Activated CD8-positive, alpha-beta T cell treated with anti-CD3 and anti-CD28 coated beads, Interleukin-2, amount 10 ng/mL, durations not matched to agents 7 days and 5 days (primary cell): ENCODE measurements at regions of chr16 and their contacts with region 1.

Region 1: GRCh38 chr16:31073968-31074813 is at the starts of genes ZNF646 and ZNF668:
- DNase-seq: peak; percentile 100
- ATAC-seq: peak; percentile 77
- H3K4me3 Mint-ChIP-seq: peak within 1 kb of the TSS; percentile 99
- H3K27ac Mint-ChIP-seq: peak within 1 kb of the TSS; percentile 99
- H3K4me1 Mint-ChIP-seq: peaks cover 48% of the 10 kb centered on the region
- H3K27me3 Mint-ChIP-seq: no peaks in the 10 kb centered on the region
- total RNA-seq, gene ZNF646: 26.0 to 30.3 TPM
- total RNA-seq, gene ZNF668: 20.8 to 22.2 TPM

Region 2: GRCh38 chr16:30984669-30985400 is 89.4 kb before region 1 on chr16 and contains the start of gene HSD3B7:
- CTCF ChIA-PET with region 1: interaction called, 15 read pairs
- POLR2A ChIA-PET with region 1: interaction called, 15 read pairs
- DNase-seq: peak; percentile 85
- ATAC-seq: peak; percentile 80
- H3K4me3 Mint-ChIP-seq: peak within 1 kb of the TSS; percentile 52
- H3K27ac Mint-ChIP-seq: peak within 1 kb of the TSS; percentile 43
- H3K4me1 Mint-ChIP-seq: peaks cover 15% of the 10 kb centered on the region
- H3K27me3 Mint-ChIP-seq: no peaks in the 10 kb centered on the region
- total RNA-seq, gene HSD3B7: 6.3 to 7.8 TPM

Region 3: DNA sequence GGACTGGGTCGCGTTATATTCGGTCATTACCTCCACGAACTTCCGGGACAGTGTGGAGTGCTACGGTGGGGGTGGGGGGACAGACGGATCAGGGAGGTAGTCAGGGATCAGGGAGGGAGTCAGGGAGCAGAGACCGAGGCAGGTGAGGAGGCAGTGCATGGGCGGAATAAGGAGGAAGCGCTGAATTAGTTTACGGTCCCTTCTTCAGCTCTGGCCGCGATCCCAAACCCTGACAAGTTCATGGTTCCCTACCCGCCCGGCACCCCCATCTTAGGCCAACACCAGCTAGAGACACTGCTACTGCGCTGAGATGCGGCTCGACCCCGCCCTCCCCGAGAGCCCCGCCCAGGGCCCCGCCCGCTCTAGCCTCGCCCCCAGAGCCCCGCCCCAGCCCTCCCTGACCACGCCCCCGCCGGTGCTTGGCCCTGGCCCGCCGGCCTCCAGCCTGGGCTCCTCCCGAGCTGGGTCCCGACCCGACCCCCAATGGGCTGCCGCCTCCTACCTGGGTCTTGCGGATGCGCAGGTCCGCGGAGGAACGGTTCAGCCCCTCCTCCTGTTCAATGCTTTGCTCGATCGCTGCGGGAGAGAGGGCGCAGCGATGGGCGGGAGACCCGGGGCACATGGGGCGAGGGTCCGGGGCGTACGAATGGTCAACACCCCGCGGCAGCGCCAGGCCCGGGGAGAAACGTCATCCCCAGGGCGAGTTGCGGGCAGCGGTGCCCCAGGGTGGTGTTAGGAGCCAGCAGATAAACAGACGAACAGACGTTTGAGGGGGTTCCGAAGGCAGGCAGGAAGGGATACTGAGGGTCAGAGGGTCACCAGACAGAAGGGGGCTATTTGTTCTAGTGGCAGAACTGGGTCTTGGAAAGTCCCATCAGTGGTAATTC is 76.9 kb before region 1 on chr16:
- CTCF ChIA-PET with region 1: interaction called, 3 read pairs
- POLR2A ChIA-PET with region 1: interaction called, 13 read pairs
- DNase-seq: peak; percentile 90
- ATAC-seq: peak; percentile 99
- H3K4me3 Mint-ChIP-seq: peak overlapping the region; percentile 92
- H3K27ac Mint-ChIP-seq: peak overlapping the region; percentile 94
- H3K4me1 Mint-ChIP-seq: peaks cover 31% of the 10 kb centered on the region
- H3K27me3 Mint-ChIP-seq: peaks cover 4% of the 10 kb centered on the region

Region 4: GRCh38 chr16:31094424-31095120 is 20.4 kb after region 1 on chr16 and contains the start of gene VKORC1:
- CTCF ChIA-PET with region 1: interaction called, 15 read pairs
- POLR2A ChIA-PET with region 1: interaction called, 12 read pairs
- DNase-seq: peak; percentile 93
- ATAC-seq: peak; percentile 95
- H3K4me3 Mint-ChIP-seq: peak within 1 kb of the TSS; percentile 95
- H3K27ac Mint-ChIP-seq: peak within 1 kb of the TSS; percentile 94
- H3K4me1 Mint-ChIP-seq: peaks cover 34% of the 10 kb centered on the region
- H3K27me3 Mint-ChIP-seq: peaks cover 3% of the 10 kb centered on the region
- total RNA-seq, gene VKORC1: 71.6 to 78.8 TPM

Region 5: GRCh38 chr16:31117391-31118197 is 43.4 kb after region 1 on chr16 and contains the start of gene KAT8:
- CTCF ChIA-PET with region 1: interaction called, 3 read pairs
- POLR2A ChIA-PET with region 1: interaction called, 10 read pairs
- DNase-seq: peak; percentile 99
- ATAC-seq: peak; percentile 95
- H3K4me3 Mint-ChIP-seq: peak within 1 kb of the TSS; percentile 85
- H3K27ac Mint-ChIP-seq: peak within 1 kb of the TSS; percentile 87
- H3K4me1 Mint-ChIP-seq: peaks cover 26% of the 10 kb centered on the region
- H3K27me3 Mint-ChIP-seq: no peaks in the 10 kb centered on the region
- total RNA-seq, gene KAT8: 58.6 to 63.8 TPM